ENCODE measurements at regions of chr5 and their contacts with region 1.

Region 1: GRCh38 chr5:131109540-131110255 is 55.4 kb downstream of the HINT1 start:
- DNase-seq: peak; percentile 34
- H3K4me3 ChIP-seq: no peak overlapping the region
- H3K27ac ChIP-seq: no peak overlapping the region
- H3K4me1 ChIP-seq: no peaks in the 10 kb centered on the region
- H3K27me3 ChIP-seq: peaks cover 2% of the 10 kb centered on the region
- CTCF ChIP-seq: peak; percentile 74 to 79

Region 2: DNA sequence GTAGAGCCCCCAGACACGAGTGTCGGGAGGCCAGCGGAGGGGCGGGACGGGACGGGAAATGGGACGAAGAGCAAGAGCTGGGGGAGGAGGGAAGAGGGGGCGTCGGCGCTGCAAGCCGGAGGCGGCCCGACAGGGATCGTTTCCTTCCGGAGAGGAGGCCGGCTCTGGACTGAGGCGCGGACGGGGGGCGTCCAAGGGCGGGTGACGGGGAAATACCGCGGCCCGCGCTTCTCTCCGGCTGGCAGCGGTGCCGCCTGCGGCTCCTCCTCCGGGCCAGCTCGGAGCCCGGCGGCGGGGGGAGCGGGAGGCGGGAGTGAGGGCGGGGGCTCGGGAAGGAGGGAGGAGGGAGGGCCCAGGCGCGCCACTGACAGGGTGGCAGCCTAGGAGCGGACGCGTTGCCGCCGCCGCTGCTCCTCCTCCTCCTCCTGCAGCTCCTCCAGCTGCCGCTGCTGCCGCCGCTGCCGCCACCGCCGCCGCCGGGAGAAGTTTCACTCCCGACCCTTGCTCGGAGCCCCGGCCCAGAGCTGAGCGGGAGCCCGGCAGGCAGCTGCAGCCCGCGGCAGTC is 1205.5 kb before region 1 on chr5 and contains the start of gene CHSY3:
- CTCF ChIA-PET with region 1: no interaction called
- dilution Hi-C with region 1: no loop called
- in situ Hi-C with region 1: no loop called
- intact Hi-C with region 1: loop called (anchors 5 kb)
- DNase-seq: peak; percentile 86
- H3K4me3 ChIP-seq: peak within 1 kb of the TSS; percentile 11 to 62 (median 57)
- H3K27ac ChIP-seq: no peak within 1 kb of the TSS
- H3K4me1 ChIP-seq: peaks cover 14% of the 10 kb centered on the region
- H3K27me3 ChIP-seq: peaks cover 18% of the 10 kb centered on the region
- CTCF ChIP-seq: no peak
- total RNA-seq, gene CHSY3: 1.7 to 1.8 TPM

Region 3: GRCh38 chr5:130109152-130109551 is 1000.5 kb before region 1 on chr5:
- CTCF ChIA-PET with region 1: no interaction called
- dilution Hi-C with region 1: no loop called
- in situ Hi-C with region 1: loop called in 1 of 2 experiments (anchors 25 kb)
- intact Hi-C with region 1: loop called (anchors 10 kb)
- DNase-seq: peak; percentile 30
- H3K4me3 ChIP-seq: no peak overlapping the region
- H3K27ac ChIP-seq: no peak overlapping the region
- H3K4me1 ChIP-seq: no peaks in the 10 kb centered on the region
- H3K27me3 ChIP-seq: no peaks in the 10 kb centered on the region
- CTCF ChIP-seq: peak; percentile 48 to 70

Region 4: GRCh38 chr5:130720355-130720754 is 389.3 kb before region 1 on chr5:
- CTCF ChIA-PET with region 1: no interaction called
- dilution Hi-C with region 1: no loop called
- in situ Hi-C with region 1: no loop called
- intact Hi-C with region 1: loop called (anchors 5 kb)
- DNase-seq: peak; percentile 55
- H3K4me3 ChIP-seq: no peak overlapping the region
- H3K27ac ChIP-seq: no peak overlapping the region
- H3K4me1 ChIP-seq: no peaks in the 10 kb centered on the region
- H3K27me3 ChIP-seq: no peaks in the 10 kb centered on the region
- CTCF ChIP-seq: peak; percentile 76 to 83

Region 5: DNA sequence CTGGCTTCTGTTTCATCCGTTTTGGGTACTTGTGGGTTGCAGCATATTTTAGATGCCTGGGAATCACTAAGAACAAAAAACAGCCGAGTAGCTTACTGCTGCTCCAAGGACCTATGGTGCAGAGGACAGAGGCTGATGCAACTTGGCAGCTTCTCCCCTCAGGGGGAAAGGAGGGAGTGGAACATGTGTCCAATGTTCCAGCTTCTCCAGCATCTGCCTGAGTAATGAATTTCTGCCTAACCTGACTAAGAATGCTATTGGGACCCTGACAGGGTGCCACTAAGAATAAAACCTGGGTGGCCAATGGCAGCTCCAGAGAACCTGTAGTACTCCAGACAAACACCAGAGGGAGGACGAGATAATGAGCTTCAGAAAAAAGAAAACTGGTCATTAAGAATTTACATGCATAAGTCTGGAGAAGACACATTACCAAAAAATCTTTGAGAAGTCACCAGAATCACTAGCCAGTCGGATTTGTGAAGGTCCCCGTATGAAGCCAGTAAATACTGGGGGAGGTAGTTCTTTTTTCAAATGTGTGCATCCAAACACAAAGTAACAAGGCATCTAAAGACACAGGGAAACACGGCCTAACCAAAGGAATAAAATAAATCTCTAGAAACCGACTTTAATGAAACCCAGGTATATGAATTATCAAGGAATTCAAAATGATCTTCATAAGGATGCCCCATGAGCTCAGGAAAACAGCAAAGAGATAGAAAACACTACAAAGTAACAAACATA is 238.2 kb before region 1 on chr5:
- CTCF ChIA-PET with region 1: no interaction called
- dilution Hi-C with region 1: no loop called
- in situ Hi-C with region 1: loop called in 1 of 2 experiments (anchors 25 kb)
- intact Hi-C with region 1: loop called (anchors 1 kb)
- DNase-seq: peak; percentile 17
- H3K4me3 ChIP-seq: no peak overlapping the region
- H3K27ac ChIP-seq: no peak overlapping the region
- H3K4me1 ChIP-seq: no peaks in the 10 kb centered on the region
- H3K27me3 ChIP-seq: no peaks in the 10 kb centered on the region
- CTCF ChIP-seq: peak; percentile 59 to 71

Region 6: GRCh38 chr5:131382407-131383395 is 273.0 kb after region 1 on chr5:
- CTCF ChIA-PET with region 1: no interaction called
- dilution Hi-C with region 1: no loop called
- in situ Hi-C with region 1: no loop called
- intact Hi-C with region 1: loop called (anchors 1 kb)
- DNase-seq: peak; percentile 65
- H3K4me3 ChIP-seq: no peak overlapping the region
- H3K27ac ChIP-seq: no peak overlapping the region
- H3K4me1 ChIP-seq: no peaks in the 10 kb centered on the region
- H3K27me3 ChIP-seq: no peaks in the 10 kb centered on the region
- CTCF ChIP-seq: peak; percentile 71 to 73

Region 7: GRCh38 chr5:131417240-131417869 is 307.7 kb after region 1 on chr5:
- CTCF ChIA-PET with region 1: no interaction called
- dilution Hi-C with region 1: no loop called
- in situ Hi-C with region 1: no loop called
- intact Hi-C with region 1: loop called (anchors 2 kb)
- DNase-seq: peak; percentile 46
- H3K4me3 ChIP-seq: no peak overlapping the region
- H3K27ac ChIP-seq: no peak overlapping the region
- H3K4me1 ChIP-seq: no peaks in the 10 kb centered on the region
- H3K27me3 ChIP-seq: no peaks in the 10 kb centered on the region
- CTCF ChIP-seq: peak; percentile 77 to 79